H1 (cell line): ENCODE measurements at regions of chr1 and their contacts with region 1.

Region 1: GRCh38 chr1:214584805-214585766 is 17.9 kb upstream of the CENPF start:
- DNase-seq: no peak
- H3K4me3 ChIP-seq: no peak overlapping the region
- H3K27ac ChIP-seq: no peak overlapping the region
- H3K4me1 ChIP-seq: peaks cover 3 to 9% (median 7%) of the 10 kb centered on the region in 4 experiments; a peak in 5 of 7 replicates
- H3K27me3 ChIP-seq: no peaks in the 10 kb centered on the region
- CTCF ChIP-seq: peak in 2 of 3 experiments; percentile 57 to 70; a peak in 2 of 4 replicates
- EP300 ChIP-seq: no peak
- POLR2A ChIP-seq: no peak
- RAD21 ChIP-seq: peak; percentile 83 to 91

Region 2: DNA sequence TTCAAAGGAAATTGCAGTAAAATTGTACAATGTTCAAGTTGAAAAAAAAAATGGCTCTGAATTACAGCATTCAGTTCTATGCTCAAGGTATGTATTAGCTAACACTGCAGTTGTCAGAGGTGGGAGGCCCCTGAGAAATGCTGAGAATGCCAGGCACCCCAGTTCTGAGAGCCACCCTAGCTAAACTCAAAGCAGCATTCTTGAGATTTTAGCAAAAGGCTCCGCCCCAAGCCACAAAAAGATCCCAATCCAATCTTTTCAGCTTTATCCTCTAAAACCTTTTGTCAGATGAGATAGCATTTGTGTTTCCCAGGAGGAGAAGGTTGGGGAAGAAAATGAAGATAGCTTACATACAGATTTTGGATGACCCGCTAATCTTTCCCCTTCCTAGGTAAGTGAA is 235.3 kb before region 1 on chr1:
- CTCF ChIA-PET with region 1: interaction called, 28 read pairs
- POLR2A ChIA-PET with region 1: interaction called, 3 read pairs
- DNase-seq: no peak
- H3K4me3 ChIP-seq: no peak overlapping the region
- H3K27ac ChIP-seq: no peak overlapping the region
- H3K4me1 ChIP-seq: peaks cover 3 to 11% (median 6%) of the 10 kb centered on the region in 4 experiments
- H3K27me3 ChIP-seq: no peaks in the 10 kb centered on the region
- CTCF ChIP-seq: no peak
- EP300 ChIP-seq: no peak
- POLR2A ChIP-seq: no peak
- RAD21 ChIP-seq: no peak

Region 3: DNA sequence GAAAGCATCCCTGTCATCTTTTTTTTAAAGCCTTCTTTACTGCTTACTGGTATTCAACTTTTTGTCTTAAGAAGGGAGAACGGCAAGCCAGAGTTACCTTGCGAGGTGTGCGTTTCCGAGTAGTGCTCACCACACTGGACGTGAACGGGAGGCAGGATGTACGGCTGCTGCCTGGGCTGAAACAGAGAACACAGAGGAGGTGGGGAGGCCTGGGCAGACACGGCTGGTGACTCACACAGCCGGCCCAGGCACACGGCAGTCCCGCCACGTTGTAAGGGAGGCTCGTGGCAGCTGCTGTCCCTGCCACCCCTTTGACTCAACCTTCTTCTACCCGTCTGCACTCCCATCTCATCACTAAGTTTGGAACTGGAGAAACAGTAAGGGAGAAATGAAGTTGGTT is 198.3 kb before region 1 on chr1:
- CTCF ChIA-PET with region 1: interaction called, 66 read pairs
- POLR2A ChIA-PET with region 1: no interaction called
- DNase-seq: peak in 1 of 2 experiments; percentile 33
- H3K4me3 ChIP-seq: no peak overlapping the region
- H3K27ac ChIP-seq: no peak overlapping the region
- H3K4me1 ChIP-seq: peaks cover 0 to 5% (median 2%) of the 10 kb centered on the region in 4 experiments; a peak in 3 of 7 replicates
- H3K27me3 ChIP-seq: no peaks in the 10 kb centered on the region
- CTCF ChIP-seq: no peak
- EP300 ChIP-seq: no peak
- POLR2A ChIP-seq: no peak
- RAD21 ChIP-seq: no peak

Region 4: DNA sequence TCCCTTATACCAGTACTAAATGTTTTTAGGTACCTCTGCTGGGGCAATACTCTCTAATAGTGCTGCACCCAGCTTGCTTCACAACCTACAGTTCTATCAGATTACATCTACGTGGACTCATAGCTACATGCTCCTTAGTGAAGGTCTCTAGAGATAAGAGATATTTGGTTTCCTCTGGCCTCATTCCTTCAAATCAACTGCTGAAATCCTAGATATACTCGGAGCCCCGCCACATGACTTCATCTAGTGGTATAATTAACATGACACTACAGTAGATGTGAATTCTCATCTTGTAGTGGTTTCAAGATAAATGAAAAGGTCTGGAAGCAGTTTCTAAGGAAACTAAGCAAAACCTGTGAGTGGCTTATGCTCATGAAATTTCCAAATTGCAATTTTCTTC is 188.8 kb before region 1 on chr1:
- CTCF ChIA-PET with region 1: interaction called, 14 read pairs
- POLR2A ChIA-PET with region 1: no interaction called
- DNase-seq: no peak
- H3K4me3 ChIP-seq: no peak overlapping the region
- H3K27ac ChIP-seq: no peak overlapping the region
- H3K4me1 ChIP-seq: peaks cover 0 to 7% (median 3%) of the 10 kb centered on the region in 4 experiments; a peak in 2 of 7 replicates
- H3K27me3 ChIP-seq: no peaks in the 10 kb centered on the region
- CTCF ChIP-seq: no peak
- EP300 ChIP-seq: no peak
- POLR2A ChIP-seq: no peak
- RAD21 ChIP-seq: no peak

Region 5: GRCh38 chr1:214615871-214616270 is 30.8 kb after region 1 on chr1:
- CTCF ChIA-PET with region 1: no interaction called
- POLR2A ChIA-PET with region 1: no interaction called
- DNase-seq: no peak
- H3K4me3 ChIP-seq: no peak overlapping the region
- H3K27ac ChIP-seq: no peak overlapping the region
- H3K4me1 ChIP-seq: no peaks in the 10 kb centered on the region
- H3K27me3 ChIP-seq: no peaks in the 10 kb centered on the region
- CTCF ChIP-seq: no peak
- EP300 ChIP-seq: no peak
- POLR2A ChIP-seq: no peak
- RAD21 ChIP-seq: no peak